ENCODE measurements at regions of chr3 and their contacts with region 1.

Region 1: DNA sequence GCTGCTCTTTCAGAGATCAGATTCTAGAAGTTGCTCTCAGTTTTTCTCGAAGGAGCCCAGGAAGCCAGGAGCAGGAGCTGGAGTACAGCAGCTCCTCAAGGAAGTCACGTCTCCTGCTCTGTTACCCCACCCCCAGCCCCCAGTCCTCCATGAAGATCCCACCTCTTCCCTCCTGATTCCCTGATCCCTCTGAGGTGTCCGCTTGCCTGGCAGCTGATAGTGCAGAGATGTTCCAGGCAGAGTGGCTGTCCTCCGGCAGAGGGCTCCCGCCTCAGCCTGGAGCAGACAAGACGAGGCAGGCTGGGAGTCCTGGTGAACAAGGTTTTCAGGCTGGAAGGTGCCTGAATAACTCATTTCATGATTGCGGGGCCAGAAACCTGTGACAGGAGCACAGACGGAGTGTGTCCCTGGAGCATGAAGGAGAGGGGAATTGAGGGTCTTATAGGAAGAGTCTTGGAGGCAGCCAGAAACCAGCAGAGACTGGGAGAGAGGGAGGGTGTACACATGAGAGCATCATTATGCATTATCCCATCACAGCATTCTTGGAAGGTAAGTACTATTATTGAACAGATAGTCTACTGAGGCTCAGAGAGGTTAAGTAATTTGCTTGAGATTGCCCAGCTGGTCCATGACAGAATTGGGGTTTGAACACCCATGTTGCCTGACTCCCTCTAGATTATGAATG is 1.2 kb downstream of the HRH1 start:
- DNase-seq: peak; percentile 36
- H3K4me3 ChIP-seq: peak overlapping the region; percentile 77
- H3K27me3 ChIP-seq: no peaks in the 10 kb centered on the region
- CTCF ChIP-seq: peak; percentile 95

Region 2: DNA sequence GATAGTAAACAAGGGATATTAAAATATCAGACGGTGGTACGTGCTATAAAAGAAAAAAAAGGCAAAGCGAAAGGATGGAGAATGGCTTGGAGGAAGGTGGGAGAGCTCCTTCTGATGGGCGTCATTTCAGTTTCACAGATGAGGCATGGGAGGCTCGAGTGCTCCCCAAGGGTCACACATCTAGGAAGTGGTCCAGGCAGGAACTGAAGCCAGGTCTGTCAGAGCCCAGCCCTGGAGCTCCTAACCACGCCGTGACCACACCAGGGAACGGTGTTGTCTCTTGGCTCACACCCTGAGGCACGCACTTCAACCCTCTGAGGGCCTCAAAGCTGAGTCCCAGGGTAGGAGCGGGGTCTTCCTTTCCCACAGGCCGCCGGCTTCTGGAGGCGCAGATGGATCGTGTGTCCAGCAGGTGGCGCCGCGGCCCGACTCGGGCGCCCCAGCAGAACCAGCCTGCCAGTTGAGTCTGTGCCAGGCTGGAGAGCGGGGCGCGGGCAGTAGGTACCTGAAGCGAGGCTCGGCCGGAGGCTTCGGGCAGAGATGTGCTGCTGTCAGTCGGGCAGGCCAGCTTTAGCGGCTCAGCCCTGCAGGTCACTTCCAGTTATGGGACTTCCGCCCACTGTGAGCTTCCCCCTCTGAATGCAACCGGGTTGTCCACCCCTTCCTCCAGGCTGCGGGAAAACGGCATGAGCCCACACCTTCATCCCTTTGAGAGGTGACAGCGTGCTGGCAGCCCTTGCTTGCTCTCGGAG is 94.8 kb before region 1 on chr3:
- CTCF ChIA-PET with region 1: interaction called, 65 read pairs
- POLR2A ChIA-PET with region 1: no interaction called
- DNase-seq: no peak
- H3K4me3 ChIP-seq: no peak overlapping the region
- H3K27me3 ChIP-seq: peaks cover 3% of the 10 kb centered on the region; the same call in 1 of the 2 replicates
- CTCF ChIP-seq: peak; percentile 93

Region 3: GRCh38 chr3:11172105-11172690 is 16.7 kb after region 1 on chr3:
- CTCF ChIA-PET with region 1: interaction called, 24 read pairs
- POLR2A ChIA-PET with region 1: no interaction called
- DNase-seq: no peak
- H3K4me3 ChIP-seq: no peak overlapping the region
- H3K27me3 ChIP-seq: no peaks in the 10 kb centered on the region
- CTCF ChIP-seq: no peak

Region 4: DNA sequence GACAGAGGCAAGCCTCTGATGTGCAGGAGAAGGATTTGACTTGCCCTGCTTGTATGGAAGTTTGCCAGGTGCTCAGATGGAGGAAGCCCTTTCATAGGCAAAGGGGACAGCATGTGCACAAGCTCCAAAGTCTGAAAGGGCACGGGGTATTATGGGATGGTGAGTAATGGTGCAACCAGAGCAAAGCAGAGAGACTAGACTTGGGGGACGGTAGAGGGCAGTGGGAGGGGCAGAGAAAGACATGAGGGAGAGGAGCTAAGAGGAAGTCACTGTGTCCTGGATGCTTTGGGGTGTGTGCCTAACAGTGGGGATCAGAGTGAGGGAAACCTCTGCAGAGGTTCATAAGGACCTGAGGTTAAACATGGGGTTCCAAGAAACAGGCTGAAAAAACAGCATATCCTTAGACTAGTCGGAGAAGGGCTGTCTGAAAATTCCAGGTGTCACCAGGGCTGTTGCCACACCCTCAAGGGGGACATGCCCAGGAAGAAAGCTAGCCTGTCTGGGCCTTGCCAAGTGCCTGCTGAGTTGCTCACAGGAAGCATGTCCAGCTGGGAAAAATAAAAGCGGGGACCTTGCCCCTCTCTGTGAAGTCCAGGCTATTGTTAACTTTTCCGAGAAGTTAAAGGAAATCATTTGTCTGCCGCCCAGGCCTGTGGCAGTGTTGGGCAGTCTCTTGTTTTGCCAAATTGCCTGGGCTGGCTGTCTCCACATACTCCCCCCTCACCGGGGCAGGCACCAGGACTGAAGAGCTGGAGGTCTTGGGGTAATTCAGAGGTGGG is 46.0 kb after region 1 on chr3:
- CTCF ChIA-PET with region 1: interaction called, 29 read pairs
- POLR2A ChIA-PET with region 1: interaction called, 3 read pairs
- DNase-seq: no peak
- H3K4me3 ChIP-seq: no peak overlapping the region
- H3K27me3 ChIP-seq: no peaks in the 10 kb centered on the region
- CTCF ChIP-seq: no peak

Region 5: DNA sequence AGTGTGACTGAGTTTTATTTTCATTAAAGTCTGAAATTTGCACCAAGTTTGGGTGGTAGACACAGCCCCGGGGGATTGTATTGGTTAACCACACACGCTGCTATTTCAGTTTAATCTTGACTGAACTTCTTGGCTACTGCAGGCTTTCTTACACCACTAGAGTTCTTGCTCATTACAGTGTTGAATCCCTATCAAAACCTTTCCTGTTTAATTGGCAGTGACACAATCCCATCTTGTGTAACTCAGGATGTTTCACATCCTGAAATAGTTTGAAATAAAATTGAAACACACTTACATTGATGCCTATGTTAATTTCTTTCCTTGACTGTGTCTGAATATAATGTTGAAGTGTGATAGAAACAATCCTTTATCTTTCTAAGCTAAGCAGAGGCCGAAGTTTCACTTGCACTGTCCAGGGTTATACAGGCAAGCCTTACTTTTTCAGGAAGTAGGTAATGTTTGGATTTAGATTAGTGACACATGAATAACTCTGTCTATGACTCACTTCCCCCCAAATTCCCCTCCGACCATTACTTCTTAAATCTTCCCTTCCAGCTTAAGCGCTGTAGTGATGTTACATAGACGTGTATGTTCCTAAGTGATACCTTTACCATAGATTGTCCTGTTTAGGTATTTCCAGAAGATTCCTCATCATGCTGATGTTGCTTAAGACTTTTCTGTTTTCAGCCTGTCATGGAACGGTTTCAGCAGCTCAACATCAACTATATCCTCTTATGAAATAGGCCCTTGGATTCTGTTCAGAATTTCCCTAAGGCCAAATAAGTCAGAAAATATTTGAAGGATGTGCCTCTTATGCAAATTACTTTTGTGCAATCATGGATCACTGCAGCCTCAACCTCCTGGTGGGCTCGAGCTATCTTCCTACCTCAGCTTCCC is 133.6 kb after region 1 on chr3:
- CTCF ChIA-PET with region 1: interaction called, 13 read pairs
- POLR2A ChIA-PET with region 1: no interaction called
- DNase-seq: peak; percentile 84
- H3K4me3 ChIP-seq: no peak overlapping the region
- H3K27me3 ChIP-seq: no peaks in the 10 kb centered on the region
- CTCF ChIP-seq: no peak

Measured in BJ (cell line).